Heart right ventricle (tissue), 16 donors: ENCODE measurements at regions of chr12 and their contacts with region 1.

Region 1: DNA sequence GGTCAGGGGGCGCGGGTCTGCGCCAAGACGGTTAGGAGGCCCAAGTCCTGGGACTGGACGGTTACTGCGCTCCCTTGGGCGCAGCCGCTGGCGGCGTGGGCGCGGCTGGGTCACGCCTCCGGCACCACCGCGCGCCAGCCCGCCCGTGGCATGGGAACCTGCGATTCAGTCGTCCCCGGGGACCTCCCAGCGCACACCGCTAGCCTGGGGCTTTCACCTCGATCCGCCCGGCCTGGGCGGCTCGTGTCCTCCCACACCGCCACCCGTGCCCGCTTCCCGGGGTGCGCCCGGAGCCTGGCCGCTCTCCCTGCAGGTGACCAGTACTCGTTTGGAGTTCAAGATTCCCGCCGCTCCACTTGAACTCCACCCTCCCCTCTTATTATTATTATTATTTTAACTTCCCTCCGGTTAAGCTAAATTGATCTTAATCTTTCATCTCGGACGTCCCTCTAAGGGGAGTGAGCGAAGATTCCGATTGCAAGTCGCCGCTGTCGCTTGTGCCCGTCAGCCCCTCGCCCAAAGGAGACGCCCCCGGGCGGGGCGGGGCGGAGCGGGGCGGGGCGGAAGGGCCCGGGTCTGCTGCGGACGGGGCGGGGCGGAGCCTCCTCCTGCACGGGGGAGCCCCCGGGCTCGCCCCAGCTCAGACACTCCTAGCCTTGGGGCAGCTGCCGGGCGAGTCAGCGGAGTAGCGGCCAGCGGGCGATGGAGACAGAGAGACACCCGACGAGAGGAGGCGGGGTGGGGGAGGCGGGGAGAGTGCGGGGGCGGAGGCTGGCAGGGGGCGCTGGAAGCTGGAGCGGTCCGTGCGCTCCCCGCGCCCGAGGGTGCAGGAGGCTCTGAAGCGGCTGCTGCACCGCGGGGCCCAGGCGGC is at the start of gene KCNMB4:
- DNase-seq: peak; percentile 52 to 69
- ATAC-seq: peak; percentile 83 to 96 (median 92)
- H3K4me3 ChIP-seq: peak within 1 kb of the TSS; percentile 56 to 89 (median 68)
- H3K27ac ChIP-seq: peak within 1 kb of the TSS in 9 of 10 donors; percentile 8 to 60 (median 36)
- H3K4me1 ChIP-seq: peaks cover 7 to 39% (median 20%) of the 10 kb centered on the region in 9 donors
- H3K27me3 ChIP-seq: peaks cover 0 to 65% (median 0%) of the 10 kb centered on the region in 7 donors
- CTCF ChIP-seq: no peak
- total RNA-seq, gene KCNMB4: 1.2 to 3.8 (median 1.6) TPM

Region 2: DNA sequence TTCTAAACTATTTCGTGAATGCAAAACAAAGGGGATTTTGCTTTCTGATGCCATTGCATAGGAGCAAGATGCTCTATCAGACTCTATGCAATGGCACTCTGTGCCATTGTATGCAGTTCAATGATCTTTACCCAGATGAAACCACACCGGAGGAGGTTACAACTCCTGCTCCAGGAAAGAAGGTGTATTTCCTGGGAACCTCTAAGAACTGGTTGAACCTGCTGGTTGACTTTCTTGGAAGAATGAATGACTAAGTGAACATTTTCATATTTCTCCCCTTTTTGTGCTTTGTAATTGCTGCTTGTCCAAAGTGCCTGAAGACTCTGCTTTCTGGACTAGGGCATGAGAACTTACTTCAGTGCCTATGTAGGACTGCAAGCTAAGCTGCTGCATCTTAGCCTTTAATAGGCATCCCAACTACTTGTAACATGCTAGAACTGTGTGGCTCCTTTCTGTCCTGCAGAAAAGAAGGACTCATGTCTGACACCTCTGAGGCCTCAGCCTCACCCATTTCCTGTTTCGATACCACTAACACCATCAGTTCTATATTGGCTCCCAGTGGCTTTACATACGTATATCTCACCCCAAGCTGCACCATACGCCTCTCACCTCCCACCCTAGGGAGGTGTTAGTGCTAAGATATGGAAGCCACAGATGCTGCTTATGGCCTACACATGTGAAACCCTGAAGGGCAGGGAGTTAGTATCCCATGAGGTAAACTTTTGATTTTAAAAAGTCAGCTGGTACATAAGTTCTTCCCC is 316.1 kb before region 1 on chr12:
- intact Hi-C with region 1: loop called in 1 of 10 experiments (anchors 10 kb)
- DNase-seq: no peak
- ATAC-seq: no peak
- H3K4me3 ChIP-seq: no peak overlapping the region
- H3K27ac ChIP-seq: no peak overlapping the region
- H3K4me1 ChIP-seq: peaks cover 0 to 19% (median 0%) of the 10 kb centered on the region in 9 donors
- H3K27me3 ChIP-seq: peaks cover 0 to 4% (median 0%) of the 10 kb centered on the region in 7 donors
- CTCF ChIP-seq: no peak

Region 3: GRCh38 chr12:70242695-70243509 is 123.0 kb before region 1 on chr12 and contains the start of gene CNOT2:
- intact Hi-C with region 1: loop called in 4 of 10 experiments (anchors 5 to 10 kb)
- DNase-seq: peak; percentile 90 to 92
- ATAC-seq: peak; percentile 96 to 99 (median 97)
- H3K4me3 ChIP-seq: peak within 1 kb of the TSS; percentile 65 to 96 (median 88)
- H3K27ac ChIP-seq: peak within 1 kb of the TSS; percentile 89 to 99 (median 96)
- H3K4me1 ChIP-seq: peaks cover 7 to 61% (median 43%) of the 10 kb centered on the region in 9 donors
- H3K27me3 ChIP-seq: no peaks in the 10 kb centered on the region
- CTCF ChIP-seq: peak in 1 of 9 donors; percentile 14
- total RNA-seq, gene CNOT2: 29.7 to 43.0 (median 36.4) TPM